ENCODE measurements at regions of chr12 and their contacts with region 1.

Region 1: GRCh38 chr12:57693659-57694458 is at the start of gene OS9:
- DNase-seq: peak; percentile 85 to 97
- H3K4me3 ChIP-seq: peak within 1 kb of the TSS; percentile 66 to 99 (median 91)
- H3K27ac ChIP-seq: peak within 1 kb of the TSS; percentile 64; the same call in 1 of the 2 replicates
- H3K4me1 ChIP-seq: peaks cover 0 to 5% (median 1%) of the 10 kb centered on the region in 4 experiments; a peak in 1 of 7 replicates
- H3K27me3 ChIP-seq: no peaks in the 10 kb centered on the region
- CTCF ChIP-seq: peak; percentile 72 to 82 (median 78)
- EP300 ChIP-seq: no peak
- POLR2A ChIP-seq: peak; percentile 80 to 94
- RAD21 ChIP-seq: peak; percentile 51 to 52
- total RNA-seq, gene OS9: 71.0 and 74.3 TPM in 2 replicates

Region 2: GRCh38 chr12:57309420-57309819 is 384.4 kb before region 1 on chr12:
- CTCF ChIA-PET with region 1: no interaction called
- POLR2A ChIA-PET with region 1: no interaction called
- DNase-seq: no peak
- H3K4me3 ChIP-seq: no peak overlapping the region
- H3K27ac ChIP-seq: no peak overlapping the region
- H3K4me1 ChIP-seq: no peaks in the 10 kb centered on the region
- H3K27me3 ChIP-seq: no peaks in the 10 kb centered on the region
- CTCF ChIP-seq: no peak
- EP300 ChIP-seq: no peak
- POLR2A ChIP-seq: no peak
- RAD21 ChIP-seq: no peak

Region 3: GRCh38 chr12:57611108-57611809 is 82.6 kb before region 1 on chr12 and contains the start of gene ARHGEF25:
- CTCF ChIA-PET with region 1: interaction called, 10 read pairs
- POLR2A ChIA-PET with region 1: no interaction called
- DNase-seq: peak in 1 of 2 experiments; percentile 83
- H3K4me3 ChIP-seq: peak within 1 kb of the TSS; percentile 50 to 73 (median 56)
- H3K27ac ChIP-seq: no peak within 1 kb of the TSS
- H3K4me1 ChIP-seq: peaks cover 8 to 17% (median 12%) of the 10 kb centered on the region in 4 experiments
- H3K27me3 ChIP-seq: peaks cover 4 to 59% (median 47%) of the 10 kb centered on the region in 4 experiments
- CTCF ChIP-seq: no peak
- EP300 ChIP-seq: no peak
- POLR2A ChIP-seq: no peak
- RAD21 ChIP-seq: no peak
- total RNA-seq, gene ARHGEF25: 5.9 and 6.4 TPM in 2 replicates

Region 4: DNA sequence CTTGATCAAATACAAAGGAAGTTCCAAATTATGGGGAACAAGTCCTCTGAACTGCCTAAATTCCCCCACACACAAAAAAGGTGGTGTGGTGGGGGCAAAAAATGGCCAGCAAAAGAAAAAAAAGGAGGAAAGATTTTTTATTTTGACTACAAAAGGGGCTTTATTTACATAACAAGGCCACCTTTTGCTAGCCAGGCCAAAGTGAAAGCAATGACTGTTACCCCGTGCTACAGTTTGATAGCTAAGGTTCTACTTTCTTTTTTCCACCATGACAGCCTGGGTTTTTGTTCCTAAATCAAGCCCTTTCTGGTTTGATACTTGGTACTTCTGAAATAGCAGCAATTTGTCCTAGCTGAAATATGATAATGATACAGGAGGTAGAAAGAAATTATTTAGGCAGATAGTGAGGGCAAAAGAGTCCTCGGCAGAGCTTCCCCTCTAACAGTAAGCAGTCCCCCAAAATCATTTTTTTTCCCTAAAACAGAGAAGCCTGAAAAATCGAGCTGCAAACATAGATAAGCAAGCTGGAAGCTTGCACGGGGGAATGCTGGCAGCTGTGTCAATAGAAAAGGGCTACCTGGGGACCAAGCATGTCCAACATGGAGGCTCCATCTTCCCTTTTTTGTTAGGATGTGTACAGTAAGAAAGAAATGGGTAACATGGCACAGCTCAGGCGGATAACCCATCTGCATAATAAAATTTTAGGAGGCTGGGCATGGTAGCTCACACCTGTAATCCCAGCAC is 52.0 kb before region 1 on chr12:
- CTCF ChIA-PET with region 1: interaction called, 11 read pairs
- POLR2A ChIA-PET with region 1: no interaction called
- DNase-seq: no peak
- H3K4me3 ChIP-seq: no peak overlapping the region
- H3K27ac ChIP-seq: no peak overlapping the region
- H3K4me1 ChIP-seq: peaks cover 0 to 5% (median 0%) of the 10 kb centered on the region in 4 experiments; a peak in 1 of 7 replicates
- H3K27me3 ChIP-seq: no peaks in the 10 kb centered on the region
- CTCF ChIP-seq: no peak
- EP300 ChIP-seq: no peak
- POLR2A ChIP-seq: no peak
- RAD21 ChIP-seq: no peak

Region 5: GRCh38 chr12:57712701-57713100 is 18.8 kb after region 1 on chr12:
- CTCF ChIA-PET with region 1: interaction called, 10 read pairs
- POLR2A ChIA-PET with region 1: interaction called, 3 read pairs
- DNase-seq: peak in 1 of 2 experiments; percentile 11
- H3K4me3 ChIP-seq: no peak overlapping the region
- H3K27ac ChIP-seq: no peak overlapping the region
- H3K4me1 ChIP-seq: no peaks in the 10 kb centered on the region
- H3K27me3 ChIP-seq: no peaks in the 10 kb centered on the region
- CTCF ChIP-seq: no peak
- EP300 ChIP-seq: no peak
- POLR2A ChIP-seq: no peak
- RAD21 ChIP-seq: no peak

Region 6: GRCh38 chr12:57735952-57736740 is 42.3 kb after region 1 on chr12:
- CTCF ChIA-PET with region 1: interaction called, 9 read pairs
- POLR2A ChIA-PET with region 1: interaction called, 11 read pairs
- DNase-seq: peak in 1 of 2 experiments; percentile 80
- H3K4me3 ChIP-seq: peak overlapping the region; percentile 19 to 76 (median 30)
- H3K27ac ChIP-seq: no peak overlapping the region
- H3K4me1 ChIP-seq: peaks cover 6 to 29% (median 12%) of the 10 kb centered on the region in 4 experiments; a peak in 6 of 7 replicates
- H3K27me3 ChIP-seq: peaks cover 50 to 97% (median 90%) of the 10 kb centered on the region in 4 experiments
- CTCF ChIP-seq: peak; percentile 60 to 66 (median 64)
- EP300 ChIP-seq: 0 out of 3 replicates have a peak, but pooled peaks of 1 of the 2 experiments have one; percentile 52
- POLR2A ChIP-seq: no peak
- RAD21 ChIP-seq: peak; percentile 73 to 77

Region 7: GRCh38 chr12:57881475-57881874 is 187.6 kb after region 1 on chr12:
- CTCF ChIA-PET with region 1: no interaction called
- POLR2A ChIA-PET with region 1: no interaction called
- DNase-seq: no peak
- H3K4me3 ChIP-seq: no peak overlapping the region
- H3K27ac ChIP-seq: no peak overlapping the region
- H3K4me1 ChIP-seq: no peaks in the 10 kb centered on the region
- H3K27me3 ChIP-seq: no peaks in the 10 kb centered on the region
- CTCF ChIP-seq: no peak
- EP300 ChIP-seq: no peak
- POLR2A ChIP-seq: no peak
- RAD21 ChIP-seq: no peak

Measured in H1 (cell line).